Activated CD8-positive, alpha-beta T cell treated with anti-CD3 and anti-CD28 coated beads for 36 hours (primary cell): ENCODE measurements at regions of chr9 and their contacts with region 1.

Region 1: GRCh38 chr9:1050116-1050800 is at the start of gene DMRT2:
- DNase-seq: peak; percentile 49
- ATAC-seq: peak; percentile 59
- H3K4me3 Mint-ChIP-seq: peak within 1 kb of the TSS; percentile 15
- H3K27ac Mint-ChIP-seq: no peak within 1 kb of the TSS
- H3K4me1 Mint-ChIP-seq: peaks cover 43% of the 10 kb centered on the region
- H3K27me3 Mint-ChIP-seq: peaks cover 87% of the 10 kb centered on the region
- CTCF ChIP-seq: no peak
- total RNA-seq, gene DMRT2: not detected

Region 2: GRCh38 chr9:841371-842209 is 208.7 kb before region 1 on chr9 and contains the start of gene DMRT1:
- CTCF ChIA-PET with region 1: no interaction called
- POLR2A ChIA-PET with region 1: no interaction called
- intact Hi-C with region 1: loop called (anchors 5 kb)
- DNase-seq: peak; percentile 12
- ATAC-seq: no peak
- H3K4me3 Mint-ChIP-seq: no peak within 1 kb of the TSS
- H3K27ac Mint-ChIP-seq: no peak within 1 kb of the TSS
- H3K4me1 Mint-ChIP-seq: peaks cover 11% of the 10 kb centered on the region
- H3K27me3 Mint-ChIP-seq: peaks cover 47% of the 10 kb centered on the region
- CTCF ChIP-seq: no peak
- total RNA-seq, gene DMRT1: not detected

Region 3: GRCh38 chr9:976258-976942 is 73.9 kb before region 1 on chr9 and contains the start of gene DMRT3:
- CTCF ChIA-PET with region 1: interaction called, 3 read pairs
- POLR2A ChIA-PET with region 1: no interaction called
- intact Hi-C with region 1: loop called (anchors 2 kb)
- DNase-seq: no peak
- ATAC-seq: no peak
- H3K4me3 Mint-ChIP-seq: no peak within 1 kb of the TSS
- H3K27ac Mint-ChIP-seq: no peak within 1 kb of the TSS
- H3K4me1 Mint-ChIP-seq: peaks cover 5% of the 10 kb centered on the region
- H3K27me3 Mint-ChIP-seq: peaks cover 70% of the 10 kb centered on the region
- CTCF ChIP-seq: no peak
- total RNA-seq, gene DMRT3: not detected

Region 4: DNA sequence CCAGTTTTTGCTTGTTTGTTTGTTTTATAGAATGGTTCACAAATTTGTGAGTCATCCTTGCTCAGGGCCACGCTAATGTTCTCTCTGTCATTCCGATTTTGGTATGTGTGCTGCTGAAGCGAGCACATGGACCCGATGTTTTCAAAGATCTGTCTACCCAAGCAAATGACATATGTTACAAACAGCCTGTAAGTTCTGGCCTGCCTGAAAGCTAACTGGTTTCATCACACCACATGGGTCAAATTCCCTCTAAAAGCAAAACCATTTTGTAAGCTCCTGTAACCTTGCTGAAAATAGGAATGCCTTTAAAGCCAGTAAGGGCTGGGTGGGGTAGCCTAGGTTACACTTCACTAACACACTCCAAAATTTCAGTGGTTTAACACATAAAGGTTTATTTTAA is 48.4 kb before region 1 on chr9:
- CTCF ChIA-PET with region 1: no interaction called
- POLR2A ChIA-PET with region 1: no interaction called
- intact Hi-C with region 1: no loop called
- DNase-seq: no peak
- ATAC-seq: no peak
- H3K4me3 Mint-ChIP-seq: no peak overlapping the region
- H3K27ac Mint-ChIP-seq: no peak overlapping the region
- H3K4me1 Mint-ChIP-seq: peaks cover 3% of the 10 kb centered on the region
- H3K27me3 Mint-ChIP-seq: peaks cover 14% of the 10 kb centered on the region
- CTCF ChIP-seq: no peak

Region 5: DNA sequence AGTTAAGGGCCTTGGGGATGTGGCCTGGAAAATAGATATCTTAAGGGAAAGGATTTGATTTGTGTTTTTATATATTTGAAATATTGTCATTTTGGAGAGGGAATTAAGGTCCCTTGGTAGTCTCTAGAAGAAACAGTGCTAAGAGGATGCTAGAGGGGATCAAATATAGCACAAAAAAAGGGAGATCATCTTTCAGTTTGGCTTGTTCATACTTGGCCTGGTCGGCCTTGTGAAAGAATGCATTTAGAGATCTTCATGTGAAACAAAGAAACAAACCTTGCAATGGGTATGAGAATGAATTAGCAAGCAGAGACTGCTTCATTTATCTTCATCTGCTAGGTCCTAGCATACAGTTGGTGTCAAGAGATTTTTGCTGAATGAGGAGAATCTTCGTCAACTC is 14.9 kb after region 1 on chr9:
- CTCF ChIA-PET with region 1: no interaction called
- POLR2A ChIA-PET with region 1: no interaction called
- intact Hi-C with region 1: no loop called
- DNase-seq: no peak
- ATAC-seq: no peak
- H3K4me3 Mint-ChIP-seq: no peak overlapping the region
- H3K27ac Mint-ChIP-seq: no peak overlapping the region
- H3K4me1 Mint-ChIP-seq: no peaks in the 10 kb centered on the region
- H3K27me3 Mint-ChIP-seq: peaks cover 12% of the 10 kb centered on the region
- CTCF ChIP-seq: no peak